ENCODE measurements at regions of chr19 and their contacts with region 1.

Region 1: DNA sequence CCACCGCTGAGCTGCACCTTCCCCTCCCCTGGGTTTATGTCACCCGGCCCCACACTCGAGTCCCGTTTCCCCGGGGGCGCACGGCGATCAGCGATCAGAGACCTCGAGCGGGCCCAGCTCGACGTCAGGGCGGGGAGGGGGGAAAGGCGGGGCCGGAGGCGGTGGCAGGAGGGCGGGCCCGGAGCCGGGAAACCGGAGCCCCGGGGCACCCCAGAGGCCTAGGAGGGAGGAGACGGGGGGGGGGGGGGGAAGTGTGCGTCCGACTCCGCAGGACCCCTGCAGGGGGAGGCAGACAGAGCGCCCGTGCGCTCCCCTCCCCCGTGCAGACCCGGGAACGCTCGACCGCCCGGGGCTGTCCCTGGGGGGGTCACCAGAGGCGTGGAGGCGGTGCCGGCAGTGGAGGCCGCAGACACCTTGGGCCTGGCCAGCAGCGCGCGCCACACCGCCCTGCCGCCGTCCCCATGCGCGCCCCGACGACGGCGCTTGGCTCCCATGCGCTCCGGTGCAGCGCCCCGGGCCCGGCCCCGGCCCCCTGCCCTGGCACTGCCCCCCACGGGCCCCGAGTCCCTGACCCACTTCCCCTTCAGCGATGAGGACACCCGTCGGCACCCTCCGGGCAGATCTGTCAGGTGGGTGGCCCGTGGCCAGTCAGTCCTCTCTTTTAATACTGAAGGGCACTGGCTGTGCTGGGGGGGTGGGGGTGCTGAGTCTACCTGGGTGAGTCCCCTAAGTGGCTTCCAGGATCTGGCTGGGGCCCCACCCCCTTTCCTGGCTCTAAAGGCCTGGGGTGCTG is 11.8 kb downstream of the PDE4A start:
- DNase-seq: no peak
- ATAC-seq: peak; percentile 74
- H3K4me3 ChIP-seq: peak overlapping the region; percentile 49 to 65
- H3K27ac ChIP-seq: peak overlapping the region; percentile 75
- H3K4me1 ChIP-seq: peaks cover 17% of the 10 kb centered on the region
- H3K27me3 ChIP-seq: no peaks in the 10 kb centered on the region
- CTCF ChIP-seq: no peak

Region 2: GRCh38 chr19:10137751-10138682 is 294.1 kb before region 1 on chr19:
- CTCF ChIA-PET with region 1: interaction called, 11 read pairs
- POLR2A ChIA-PET with region 1: no interaction called
- in situ Hi-C with region 1: no loop called
- intact Hi-C with region 1: no loop called
- DNase-seq: no peak
- ATAC-seq: peak; percentile 20; the same call in 1 of the 2 replicates
- H3K4me3 ChIP-seq: no peak overlapping the region
- H3K27ac ChIP-seq: no peak overlapping the region
- H3K4me1 ChIP-seq: no peaks in the 10 kb centered on the region
- H3K27me3 ChIP-seq: no peaks in the 10 kb centered on the region
- CTCF ChIP-seq: no peak

Region 3: GRCh38 chr19:10403137-10404021 is 28.8 kb before region 1 on chr19 and contains the start of gene CDC37:
- CTCF ChIA-PET with region 1: interaction called, 12 read pairs
- POLR2A ChIA-PET with region 1: no interaction called
- in situ Hi-C with region 1: no loop called
- intact Hi-C with region 1: no loop called
- DNase-seq: peak; percentile 73
- ATAC-seq: peak; percentile 94
- H3K4me3 ChIP-seq: peak within 1 kb of the TSS; percentile 79 to 99
- H3K27ac ChIP-seq: peak within 1 kb of the TSS; percentile 94
- H3K4me1 ChIP-seq: peaks cover 9% of the 10 kb centered on the region; the same call in 1 of the 2 replicates
- H3K27me3 ChIP-seq: no peaks in the 10 kb centered on the region
- CTCF ChIP-seq: no peak
- total RNA-seq, gene CDC37: 162 TPM

Region 4: DNA sequence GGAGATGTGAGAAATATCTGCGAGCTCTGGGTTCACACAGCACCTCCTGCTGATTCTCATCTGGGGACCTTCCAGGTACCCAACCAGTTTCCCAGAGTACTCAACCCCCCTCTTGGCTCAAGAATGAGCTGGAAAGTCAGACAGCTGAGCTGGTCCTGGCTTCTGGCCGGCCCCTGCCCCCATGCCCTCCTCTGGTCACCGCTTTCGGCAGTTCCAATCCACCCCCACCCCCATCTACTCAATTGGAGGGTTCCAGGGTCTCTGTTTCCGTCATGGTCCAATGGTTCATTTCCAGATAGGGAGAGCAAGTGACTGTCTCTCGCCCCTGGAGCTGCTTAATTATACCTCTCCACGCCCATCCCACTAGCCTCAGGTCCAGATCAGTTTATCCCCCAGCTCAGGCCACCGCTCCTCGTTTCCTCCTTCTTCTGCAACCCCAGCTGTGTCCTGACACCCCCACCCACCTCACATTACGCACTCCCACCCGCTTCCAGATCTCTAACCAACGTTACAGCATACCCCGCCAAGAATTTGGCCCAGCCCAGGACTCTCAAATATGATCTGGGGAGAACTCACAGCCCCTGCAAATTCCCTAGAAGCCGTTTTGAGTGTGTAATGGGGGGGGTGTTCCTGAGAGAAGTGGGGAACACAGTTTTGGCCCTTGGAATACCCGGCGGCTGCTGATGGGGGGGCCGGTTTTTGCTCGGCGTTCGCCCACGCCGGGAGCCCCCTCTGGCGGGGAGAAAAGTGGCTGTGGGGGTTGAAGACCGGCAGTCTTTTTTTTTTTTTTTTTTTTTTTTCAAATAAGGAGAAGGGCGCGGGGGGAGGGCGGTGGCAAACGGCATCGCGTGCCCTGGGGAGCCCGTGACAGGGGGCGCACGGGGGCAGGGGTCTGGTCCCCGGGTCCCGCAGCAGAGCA is 13.6 kb before region 1 on chr19:
- CTCF ChIA-PET with region 1: interaction called, 11 read pairs
- POLR2A ChIA-PET with region 1: no interaction called
- in situ Hi-C with region 1: no loop called
- intact Hi-C with region 1: no loop called
- DNase-seq: no peak
- ATAC-seq: peak; percentile 14
- H3K4me3 ChIP-seq: peak overlapping the region; percentile 51 to 72
- H3K27ac ChIP-seq: peak overlapping the region; percentile 79
- H3K4me1 ChIP-seq: peaks cover 13% of the 10 kb centered on the region
- H3K27me3 ChIP-seq: no peaks in the 10 kb centered on the region
- CTCF ChIP-seq: peak; percentile 38